ENCODE measurements at regions of chr7 and their contacts with region 1.

Region 1: GRCh38 chr7:76142861-76143260 is 58.8 kb upstream of the SRRM3 start:
- DNase-seq: no peak
- ATAC-seq: no peak
- H3K4me3 ChIP-seq: no peak overlapping the region
- H3K27ac ChIP-seq: no peak overlapping the region
- H3K4me1 ChIP-seq: no peaks in the 10 kb centered on the region
- H3K27me3 ChIP-seq: no peaks in the 10 kb centered on the region; a peak in 1 of 4 replicates
- CTCF ChIP-seq: no peak
- EP300 ChIP-seq: no peak
- POLR2A ChIP-seq: no peak
- RAD21 ChIP-seq: no peak

Region 2: DNA sequence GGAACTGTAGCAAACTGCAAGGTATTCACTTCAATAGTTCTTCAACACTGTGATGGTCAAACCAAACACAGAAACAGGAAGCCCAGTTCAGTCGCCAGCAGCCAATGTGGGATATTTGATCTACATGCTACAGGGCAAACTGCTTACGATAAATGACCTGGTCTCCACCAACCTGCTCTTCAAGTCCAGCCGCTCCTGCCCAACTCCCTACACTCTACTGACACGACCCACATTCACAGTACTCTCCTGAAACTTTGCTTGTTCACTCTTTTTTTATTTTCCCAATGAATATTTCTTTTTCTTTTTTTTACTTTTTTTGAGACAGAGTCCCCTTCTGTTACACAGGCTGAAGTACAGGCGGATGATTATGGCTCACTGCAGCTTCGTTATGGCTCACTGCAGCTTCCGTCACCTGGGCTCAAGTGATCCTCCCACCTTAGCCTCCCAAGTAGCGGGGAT is 52.9 kb before region 1 on chr7:
- CTCF ChIA-PET with region 1: no interaction called
- POLR2A ChIA-PET with region 1: no interaction called
- RAD21 ChIA-PET with region 1: no interaction called
- SMC1A ChIA-PET with region 1: no interaction called
- in situ Hi-C with region 1: no loop called
- intact Hi-C with region 1: loop called (anchors 5 kb)
- DNase-seq: peak; percentile 8
- ATAC-seq: peak; percentile 83
- H3K4me3 ChIP-seq: no peak overlapping the region
- H3K27ac ChIP-seq: no peak overlapping the region
- H3K4me1 ChIP-seq: no peaks in the 10 kb centered on the region
- H3K27me3 ChIP-seq: no peaks in the 10 kb centered on the region
- CTCF ChIP-seq: no peak
- EP300 ChIP-seq: no peak
- POLR2A ChIP-seq: no peak
- RAD21 ChIP-seq: no peak

Measured in GM12878 (cell line).